ENCODE measurements at regions of chr7 and their contacts with region 1.

Region 1: DNA sequence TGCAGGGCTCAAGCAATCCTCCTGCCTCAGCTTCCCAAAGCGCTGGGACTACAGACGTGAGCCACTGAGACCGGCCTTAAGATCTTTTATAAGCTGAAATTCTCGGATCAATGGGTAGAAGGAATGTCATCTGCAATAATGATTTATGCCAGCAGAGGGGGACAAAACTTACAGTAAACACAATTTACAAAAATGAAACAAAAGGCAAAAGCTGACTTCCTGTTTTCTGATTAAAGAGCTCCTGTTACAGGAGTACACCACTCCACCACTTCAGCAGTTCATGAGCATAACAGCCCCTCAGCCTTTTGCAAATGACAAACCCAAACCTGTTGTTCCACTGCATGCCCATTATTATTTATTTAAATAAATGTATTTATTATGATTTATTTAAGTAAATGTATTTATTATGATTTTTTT is 88.5 kb upstream of the ATP6V0A4 start:
- DNase-seq: peak; percentile 81 to 90 (median 89)
- H3K4me3 ChIP-seq: peak overlapping the region in 1 of 7 experiments; percentile 9
- H3K27ac ChIP-seq: no peak overlapping the region
- H3K4me1 ChIP-seq: no peaks in the 10 kb centered on the region
- H3K27me3 ChIP-seq: no peaks in the 10 kb centered on the region

Region 2: DNA sequence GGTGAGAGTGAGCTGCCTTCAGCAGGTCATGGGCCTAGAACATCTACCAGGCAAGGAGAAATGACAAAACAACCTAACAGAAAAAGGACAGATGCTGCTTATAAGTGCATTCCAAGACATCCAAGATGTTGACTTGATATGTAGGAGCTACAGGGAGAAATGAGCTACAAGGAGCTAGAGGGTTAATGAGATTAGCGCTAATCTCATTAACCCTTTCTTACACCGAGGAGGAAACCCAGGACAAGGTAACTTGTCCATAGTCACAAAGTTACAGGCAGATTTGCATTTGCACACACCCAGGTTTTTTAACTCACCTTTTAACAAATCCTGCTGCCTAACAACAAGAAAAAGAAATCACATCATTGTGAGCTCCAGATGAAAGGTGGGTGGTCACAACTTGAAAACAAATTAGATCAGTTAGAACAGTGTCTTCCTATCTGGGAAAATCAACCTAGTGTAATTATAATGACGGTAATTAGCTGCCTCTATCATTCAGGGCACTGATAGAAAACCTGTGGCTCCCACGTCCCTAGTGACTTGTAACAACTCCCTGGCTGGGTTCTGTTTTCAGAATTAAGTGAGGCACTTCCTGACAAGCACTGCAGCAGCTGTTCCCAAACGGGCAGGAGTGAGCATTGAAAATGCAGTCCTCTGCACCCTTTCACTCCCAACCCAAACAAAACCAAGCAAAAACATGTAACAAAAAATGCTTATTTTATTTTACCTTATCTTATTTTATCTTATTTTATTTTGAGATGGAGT is 89.0 kb after region 1 on chr7:
- CTCF ChIA-PET with region 1: interaction called, 10 read pairs
- POLR2A ChIA-PET with region 1: no interaction called
- DNase-seq: peak in 2 of 3 donors; percentile 14 to 28
- H3K4me3 ChIP-seq: no peak overlapping the region
- H3K27ac ChIP-seq: no peak overlapping the region
- H3K4me1 ChIP-seq: peaks cover 2 to 15% (median 13%) of the 10 kb centered on the region in 4 experiments
- H3K27me3 ChIP-seq: no peaks in the 10 kb centered on the region

Region 3: DNA sequence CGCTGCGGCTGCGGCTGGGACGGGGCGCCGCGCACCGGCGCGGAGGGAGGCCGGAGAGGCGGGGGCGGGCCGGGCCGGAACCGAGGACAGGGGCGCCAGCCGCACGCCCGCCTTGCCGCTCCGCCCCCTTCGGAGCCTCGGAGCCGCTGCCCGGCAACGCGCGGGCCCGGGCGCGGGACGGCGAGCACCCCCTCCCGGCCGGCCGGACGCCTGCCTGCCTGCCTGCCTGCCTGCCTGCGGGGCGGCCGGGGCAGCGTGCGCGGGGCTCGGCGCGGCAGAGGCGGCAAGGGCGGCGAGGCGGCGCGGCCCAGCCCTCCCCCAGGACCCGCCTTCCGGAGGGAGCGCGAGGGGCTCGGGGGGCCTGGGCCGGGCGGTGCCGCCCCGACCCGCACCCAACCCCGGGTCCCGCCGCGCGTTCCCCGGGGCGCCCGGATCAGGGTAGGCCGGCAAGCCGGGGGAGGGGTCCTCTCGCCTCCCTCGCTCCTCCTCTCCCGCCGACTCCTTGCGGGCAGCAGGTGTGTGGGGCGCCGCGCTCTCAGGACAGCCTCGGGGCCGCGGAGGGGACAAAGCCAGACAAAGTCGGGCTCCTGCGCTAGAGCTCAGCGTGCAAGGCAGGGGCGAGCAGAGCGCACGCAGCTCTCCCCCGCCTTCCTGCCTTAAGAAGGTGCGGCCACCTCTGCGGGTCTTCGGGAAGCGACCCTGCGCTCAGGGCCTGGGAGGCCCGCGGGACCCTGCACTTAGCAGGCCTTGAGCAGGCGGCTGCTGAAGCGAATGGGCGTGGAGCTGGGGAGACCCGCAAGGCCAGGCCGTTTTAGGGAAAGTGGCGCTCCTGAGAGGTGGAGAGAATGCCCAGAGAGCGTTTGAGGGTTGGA is 95.1 kb after region 1 on chr7 and contains the start of gene KIAA1549:
- CTCF ChIA-PET with region 1: interaction called, 10 read pairs
- POLR2A ChIA-PET with region 1: no interaction called
- DNase-seq: peak; percentile 74 to 90 (median 82)
- H3K4me3 ChIP-seq: peak within 1 kb of the TSS; percentile 61 to 92 (median 76)
- H3K27ac ChIP-seq: peak within 1 kb of the TSS in 1 of 2 experiments; percentile 70
- H3K4me1 ChIP-seq: peaks cover 5 to 22% (median 20%) of the 10 kb centered on the region in 4 experiments
- H3K27me3 ChIP-seq: no peaks in the 10 kb centered on the region